Esophagus squamous epithelium (tissue), 5 donors: ENCODE measurements at regions of chr16 and their contacts with region 1.

Region 1: DNA sequence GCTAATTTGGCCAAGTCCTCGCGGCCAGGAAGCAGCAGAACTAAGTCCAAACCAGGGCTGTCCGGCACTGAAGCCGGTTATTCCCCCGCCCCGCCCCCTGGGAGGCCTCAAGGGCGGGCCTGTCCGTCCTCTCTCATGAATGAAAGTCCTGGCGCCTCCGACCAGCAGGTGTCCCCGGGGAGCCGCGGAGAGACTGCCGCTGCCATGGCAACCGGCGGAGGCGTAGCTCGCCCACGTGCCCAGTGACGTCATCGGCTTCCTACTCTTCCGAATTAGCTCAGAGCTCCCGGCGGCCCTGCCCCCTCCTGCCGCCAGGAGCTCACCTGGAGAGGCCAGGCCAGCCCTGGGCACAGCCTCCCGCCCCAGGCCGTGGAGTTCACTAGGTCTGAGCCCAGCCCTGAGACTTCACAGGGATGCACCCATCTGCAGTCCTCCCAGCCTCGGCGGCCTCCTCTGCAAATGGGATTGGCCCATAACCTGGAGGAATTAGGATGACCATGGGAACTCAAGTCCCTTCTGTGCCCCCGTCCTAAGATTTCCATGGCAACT is 1.3 kb downstream of the SPATA2L start:
- DNase-seq: peak; percentile 89
- H3K4me3 ChIP-seq: peak overlapping the region; percentile 64 to 78 (median 71)
- H3K27ac ChIP-seq: peak overlapping the region; percentile 89 to 94 (median 92)
- H3K4me1 ChIP-seq: peaks cover 12 to 36% (median 20%) of the 10 kb centered on the region in 3 donors
- H3K27me3 ChIP-seq: peaks cover 0 to 18% (median 0%) of the 10 kb centered on the region in 4 donors
- CTCF ChIP-seq: peak; percentile 67 to 94 (median 90)
- POLR2A ChIP-seq: peak in 1 of 4 donors; percentile 36

Region 2: GRCh38 chr16:89602273-89602951 is 97.8 kb before region 1 on chr16:
- intact Hi-C with region 1: no loop called
- DNase-seq: no peak
- H3K4me3 ChIP-seq: peak overlapping the region in 1 of 4 donors; percentile 47
- H3K27ac ChIP-seq: no peak overlapping the region
- H3K4me1 ChIP-seq: peaks cover 17 to 37% (median 31%) of the 10 kb centered on the region in 3 donors
- H3K27me3 ChIP-seq: peaks cover 0 to 27% (median 0%) of the 10 kb centered on the region in 4 donors
- CTCF ChIP-seq: no peak
- POLR2A ChIP-seq: no peak

Region 3: DNA sequence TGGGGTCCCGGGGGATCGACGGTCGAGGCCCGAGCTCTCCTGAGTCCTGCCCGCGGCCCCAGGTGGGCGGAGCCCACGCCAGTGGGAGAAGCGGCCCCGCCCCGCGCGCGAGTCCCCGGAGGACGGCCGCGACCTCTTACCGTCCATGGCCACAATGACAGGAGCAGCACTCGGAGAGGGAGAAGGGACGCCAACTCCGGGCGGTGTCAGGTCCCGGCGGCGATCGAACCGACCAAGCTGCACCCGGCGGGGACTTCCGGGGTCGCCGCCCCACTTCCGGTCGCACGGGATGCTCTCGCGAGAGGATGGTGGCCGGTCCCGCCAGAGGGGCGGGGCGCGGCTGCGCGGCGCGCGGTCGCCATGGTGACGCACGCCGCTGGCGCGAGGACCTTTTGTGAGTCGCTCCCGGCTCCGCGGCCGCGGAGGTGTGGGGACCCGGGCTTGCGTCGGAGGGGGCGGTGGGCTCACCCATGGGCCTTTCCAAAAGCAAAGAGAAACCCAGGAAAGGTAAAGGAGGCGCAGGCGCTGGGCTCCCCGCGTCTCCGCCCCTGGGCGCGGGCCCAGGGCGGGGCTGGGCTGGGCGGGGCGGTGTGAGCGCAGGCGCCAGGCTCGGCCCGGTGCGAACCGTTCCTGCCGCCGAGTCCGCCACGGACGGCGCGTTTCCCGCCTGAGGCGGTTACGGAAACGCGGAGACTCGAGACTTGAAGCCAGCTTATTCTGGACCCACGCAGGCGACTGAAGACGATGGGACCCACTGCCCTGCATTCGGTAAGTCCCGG is 42.5 kb before region 1 on chr16 and contains the starts of genes CHMP1A and SPATA33:
- intact Hi-C with region 1: no loop called
- DNase-seq: peak; percentile 48
- H3K4me3 ChIP-seq: peak within 1 kb of the TSS; percentile 91 to 99 (median 98)
- H3K27ac ChIP-seq: peak within 1 kb of the TSS; percentile 89 to 95 (median 93)
- H3K4me1 ChIP-seq: peaks cover 13 to 39% (median 15%) of the 10 kb centered on the region in 3 donors
- H3K27me3 ChIP-seq: no peaks in the 10 kb centered on the region
- CTCF ChIP-seq: no peak
- POLR2A ChIP-seq: peak in 3 of 4 donors; percentile 36 to 43 (median 39)
- total RNA-seq, gene CHMP1A: 83.0 to 116 (median 104) TPM
- total RNA-seq, gene SPATA33: 1.8 to 4.9 (median 2.8) TPM

Region 4: DNA sequence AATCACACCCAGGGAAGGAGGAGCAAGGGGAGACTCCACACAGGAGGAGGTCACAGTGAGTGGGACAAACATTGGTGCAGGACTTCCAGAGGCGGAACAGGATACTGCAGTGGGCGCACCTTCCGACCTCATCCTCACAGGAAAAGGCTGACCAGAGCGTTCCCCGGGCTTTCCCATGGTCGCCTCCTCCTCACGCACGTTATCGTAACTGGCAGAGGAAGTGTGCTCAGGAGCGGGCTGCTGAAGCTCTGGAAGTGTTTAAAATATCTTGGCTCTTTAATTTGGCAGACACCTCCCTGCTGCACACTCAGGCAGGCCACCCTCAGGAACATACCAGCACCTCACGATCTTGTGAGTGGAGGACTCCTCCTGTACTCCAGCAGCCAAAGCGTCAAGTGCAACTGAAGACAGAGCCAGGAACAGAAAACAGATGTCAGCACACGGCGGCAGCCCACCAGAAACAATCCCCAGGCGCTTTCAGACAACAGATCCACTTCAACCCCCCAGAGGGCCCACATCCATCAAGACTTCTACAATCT is 98.7 kb after region 1 on chr16:
- intact Hi-C with region 1: loop called (anchors 10 kb)
- DNase-seq: no peak
- H3K4me3 ChIP-seq: no peak overlapping the region
- H3K27ac ChIP-seq: peak overlapping the region in 1 of 4 donors; percentile 25
- H3K4me1 ChIP-seq: no peaks in the 10 kb centered on the region
- H3K27me3 ChIP-seq: no peaks in the 10 kb centered on the region
- CTCF ChIP-seq: peak in 1 of 6 experiments; percentile 4
- POLR2A ChIP-seq: no peak